ENCODE measurements at regions of chr10 and their contacts with region 1.

Region 1: GRCh38 chr10:71812016-71812912 is 38.8 kb downstream of the PSAP start:
- DNase-seq: peak; percentile 78 to 86
- H3K4me3 ChIP-seq: no peak overlapping the region
- H3K27ac ChIP-seq: no peak overlapping the region
- H3K4me1 ChIP-seq: peaks cover 0 to 39% (median 19%) of the 10 kb centered on the region in 4 donors
- H3K27me3 ChIP-seq: peaks cover 0 to 17% (median 0%) of the 10 kb centered on the region in 3 donors
- CTCF ChIP-seq: peak in 5 of 7 experiments; percentile 61 to 95 (median 82)
- EP300 ChIP-seq: no peak
- POLR2A ChIP-seq: no peak

Region 2: DNA sequence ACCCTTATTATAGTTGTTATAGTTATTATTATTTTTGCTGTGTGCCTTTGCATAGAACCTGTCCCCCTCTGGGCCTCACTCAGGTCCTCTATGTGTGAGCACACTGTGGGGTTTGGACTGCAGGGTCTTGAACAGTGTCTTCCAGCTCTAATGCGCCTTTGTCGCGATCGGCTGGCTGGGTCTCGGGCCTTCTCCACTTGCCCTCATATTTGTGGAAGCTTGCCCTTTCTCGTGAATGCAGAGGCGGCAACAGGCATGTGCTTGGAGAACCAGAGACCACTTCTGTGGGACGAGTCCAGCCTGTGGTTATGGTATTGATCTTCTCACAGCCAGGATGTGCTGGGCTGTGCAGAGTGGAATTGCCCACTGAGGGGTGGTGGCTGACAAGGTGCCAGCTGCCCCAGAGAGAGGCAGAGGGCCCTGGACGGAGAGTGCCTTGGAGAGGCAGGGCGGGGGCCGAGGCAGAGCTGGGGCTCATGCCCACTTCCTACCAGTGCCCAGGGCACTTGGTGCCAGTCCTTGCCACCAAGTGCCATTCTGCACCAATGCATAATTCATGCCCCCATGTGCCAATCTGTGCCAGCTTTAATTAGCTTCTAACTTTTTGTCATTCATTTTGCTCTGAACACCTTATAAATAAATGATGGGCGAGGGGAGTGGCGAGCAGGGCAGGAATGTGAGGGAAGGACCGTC is 422.4 kb before region 1 on chr10:
- intact Hi-C with region 1: loop called (anchors 5 kb)
- DNase-seq: no peak
- H3K4me3 ChIP-seq: no peak overlapping the region
- H3K27ac ChIP-seq: no peak overlapping the region
- H3K4me1 ChIP-seq: no peaks in the 10 kb centered on the region
- H3K27me3 ChIP-seq: peaks cover 0 to 30% (median 9%) of the 10 kb centered on the region in 3 donors
- CTCF ChIP-seq: no peak
- EP300 ChIP-seq: no peak
- POLR2A ChIP-seq: no peak